ENCODE measurements at regions of chr4 and their contacts with region 1.

Region 1: DNA sequence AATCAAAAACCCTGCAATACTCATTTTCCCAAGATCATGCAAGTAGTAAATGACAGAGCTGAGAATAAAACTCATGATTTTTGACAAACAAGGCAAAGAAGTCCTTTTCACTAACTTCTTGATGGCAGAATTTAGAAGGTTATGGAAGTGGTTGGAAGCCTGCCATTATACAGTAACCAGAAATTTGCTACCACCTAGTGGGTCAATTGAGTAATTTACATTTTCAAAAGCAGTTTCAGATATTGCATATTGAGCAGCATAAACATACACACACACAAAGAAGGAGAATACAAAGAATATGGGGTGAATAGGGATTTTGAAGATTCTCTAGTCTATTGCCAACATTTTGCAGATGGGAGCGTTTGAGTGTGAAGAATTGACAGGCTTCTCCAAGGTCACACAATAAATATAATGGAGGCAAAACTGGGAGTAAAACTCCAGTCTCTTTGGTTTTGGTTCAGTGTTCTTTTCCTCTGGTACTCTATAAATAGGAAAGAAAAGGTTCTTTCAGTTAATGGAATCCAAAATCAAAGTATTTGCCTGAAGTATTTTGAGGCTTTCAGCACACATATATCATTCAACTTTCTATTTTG is 70.2 kb downstream of the GC start:
- DNase-seq: no peak
- H3K4me3 ChIP-seq: no peak overlapping the region
- H3K27ac ChIP-seq: no peak overlapping the region
- H3K4me1 ChIP-seq: no peaks in the 10 kb centered on the region
- H3K27me3 ChIP-seq: no peaks in the 10 kb centered on the region
- CTCF ChIP-seq: peak; percentile 50 to 65 (median 54)
- EP300 ChIP-seq: no peak
- POLR2A ChIP-seq: no peak

Region 2: DNA sequence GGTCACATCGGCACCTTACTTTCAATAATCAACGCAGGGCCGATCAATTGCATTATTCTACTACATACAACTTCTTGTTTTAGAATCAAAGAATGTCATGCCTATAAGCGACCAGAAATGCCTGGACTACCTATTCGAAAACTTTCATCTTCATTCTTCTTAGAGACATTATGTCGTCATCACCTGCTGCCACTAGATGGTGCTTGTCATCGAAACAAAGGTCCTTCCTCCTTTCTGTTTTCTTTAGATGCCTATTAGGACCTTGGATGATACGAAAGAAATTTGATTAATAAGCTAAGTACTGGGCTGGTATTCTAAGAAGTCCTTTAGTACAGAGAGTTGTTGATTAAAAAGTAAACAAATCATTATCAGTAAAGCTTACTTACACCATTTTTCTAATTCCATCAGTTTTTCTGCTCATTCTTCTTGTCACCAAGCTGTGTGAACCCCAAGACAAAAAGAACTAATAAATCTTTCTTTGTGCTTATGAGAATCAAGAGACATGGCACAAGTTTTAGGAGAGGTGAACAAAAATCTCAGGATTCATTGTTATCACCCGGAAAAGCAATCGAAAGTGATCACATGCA is 529.4 kb before region 1 on chr4:
- intact Hi-C with region 1: loop called (anchors 2 kb)
- DNase-seq: no peak
- H3K4me3 ChIP-seq: no peak overlapping the region
- H3K27ac ChIP-seq: no peak overlapping the region
- H3K4me1 ChIP-seq: peaks cover 0 to 25% (median 19%) of the 10 kb centered on the region in 4 donors
- H3K27me3 ChIP-seq: peaks cover 0 to 5% (median 0%) of the 10 kb centered on the region in 4 donors
- CTCF ChIP-seq: peak; percentile 53 to 61 (median 58)
- EP300 ChIP-seq: no peak
- POLR2A ChIP-seq: no peak

Region 3: DNA sequence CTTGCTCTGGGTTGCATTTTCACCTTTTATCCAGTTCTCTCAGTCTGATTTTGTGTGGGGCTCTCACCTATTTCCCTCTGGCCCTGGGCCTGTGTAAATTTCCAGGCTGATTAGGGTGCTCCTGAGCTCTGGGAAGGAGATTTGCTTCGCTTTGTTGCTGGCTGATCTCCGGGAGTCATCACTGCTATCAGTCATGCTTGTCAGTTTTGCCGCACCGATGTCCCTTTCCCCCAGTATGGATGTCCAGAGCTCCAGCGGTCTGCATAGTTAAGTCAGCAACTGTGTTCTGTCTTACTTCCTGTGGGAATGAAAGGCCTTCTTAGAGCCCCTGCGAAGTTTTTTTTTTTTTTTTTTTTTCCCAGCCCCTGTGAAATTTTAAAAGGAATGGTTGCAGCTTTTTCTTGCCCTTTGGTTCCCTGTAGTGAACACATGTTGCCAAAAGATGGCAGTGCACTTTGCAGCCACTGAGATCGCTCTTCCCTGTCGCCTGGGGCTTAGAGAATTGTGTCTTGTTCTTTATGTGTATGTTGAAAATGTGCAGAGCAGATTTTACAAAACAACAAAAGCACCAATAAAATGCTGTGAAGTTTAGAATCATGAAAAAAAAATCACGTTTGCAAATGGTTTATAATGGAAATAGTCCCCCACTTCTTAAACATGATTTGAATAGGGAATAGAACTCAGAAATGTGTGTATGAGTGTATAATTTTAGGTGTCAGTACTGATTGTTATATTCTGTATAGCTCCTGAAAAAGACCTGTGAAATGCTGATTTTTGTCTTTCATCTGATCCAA is 484.0 kb before region 1 on chr4:
- intact Hi-C with region 1: loop called (anchors 2 kb)
- DNase-seq: no peak
- H3K4me3 ChIP-seq: no peak overlapping the region
- H3K27ac ChIP-seq: peak overlapping the region in 1 of 4 donors; percentile 36
- H3K4me1 ChIP-seq: peaks cover 21 to 35% (median 30%) of the 10 kb centered on the region in 4 donors
- H3K27me3 ChIP-seq: no peaks in the 10 kb centered on the region
- CTCF ChIP-seq: peak; percentile 57 to 68 (median 66)
- EP300 ChIP-seq: no peak
- POLR2A ChIP-seq: no peak

Region 4: DNA sequence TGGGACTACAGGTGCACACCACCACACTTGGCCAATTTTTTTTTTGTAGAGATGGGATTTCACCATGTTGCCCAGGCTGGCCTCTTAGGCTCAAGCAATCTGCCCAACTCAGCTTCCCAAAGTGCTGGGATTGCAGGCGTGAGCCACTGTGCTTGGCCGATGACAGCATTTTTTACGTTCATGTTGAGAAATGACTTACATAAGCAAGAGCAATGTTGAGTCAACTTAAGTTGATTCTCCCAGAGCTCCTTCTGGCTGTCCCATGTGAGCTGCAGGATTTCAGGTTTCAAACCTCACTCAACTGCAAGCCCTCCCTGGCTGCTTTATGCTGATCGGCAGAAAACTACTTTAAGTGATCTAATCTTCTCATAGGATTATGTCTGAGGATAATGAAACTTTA is 16.7 kb before region 1 on chr4:
- intact Hi-C with region 1: no loop called
- DNase-seq: no peak
- H3K4me3 ChIP-seq: no peak overlapping the region
- H3K27ac ChIP-seq: no peak overlapping the region
- H3K4me1 ChIP-seq: no peaks in the 10 kb centered on the region
- H3K27me3 ChIP-seq: no peaks in the 10 kb centered on the region
- CTCF ChIP-seq: no peak
- EP300 ChIP-seq: no peak
- POLR2A ChIP-seq: no peak

Measured in esophagus muscularis mucosa (tissue), 4 donors.